Aorta (tissue), 5 donors: ENCODE measurements at regions of chr7 and their contacts with region 1.

Region 1: DNA sequence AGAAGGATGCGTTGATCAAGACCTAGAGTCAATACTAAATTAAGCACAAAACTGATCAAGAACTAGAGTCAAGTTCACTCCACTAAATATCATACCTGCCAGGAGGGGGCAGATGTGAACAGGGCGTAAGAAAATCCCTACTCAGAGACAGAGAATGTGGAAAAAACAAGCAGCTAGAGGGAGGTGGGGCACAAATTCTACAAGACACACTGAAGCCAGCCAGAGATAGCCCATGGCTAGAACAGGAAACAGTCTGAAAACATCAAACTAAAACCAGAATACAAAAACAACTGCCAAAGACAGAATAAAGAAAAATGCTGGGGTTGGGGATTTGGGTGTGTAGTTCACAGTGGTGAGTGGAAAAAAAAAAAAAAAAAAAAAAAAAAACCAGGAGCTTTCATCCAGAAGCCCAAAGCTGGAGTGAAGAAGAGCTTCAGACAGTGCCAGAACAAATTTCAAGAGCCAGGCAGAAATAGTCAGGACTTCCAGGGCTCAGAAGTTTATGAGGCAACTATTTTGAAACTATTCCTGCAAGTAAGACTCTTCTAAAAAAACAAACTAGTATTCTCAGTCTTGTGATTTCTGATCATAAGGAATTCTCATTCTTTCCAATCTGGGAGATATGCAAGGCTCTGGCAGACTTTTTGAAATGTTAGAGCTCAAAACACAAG is 118.3 kb downstream of the CCDC71L start:
- DNase-seq: no peak
- ATAC-seq: peak; percentile 88
- H3K4me3 ChIP-seq: no peak overlapping the region
- H3K27ac ChIP-seq: no peak overlapping the region
- H3K4me1 ChIP-seq: no peaks in the 10 kb centered on the region
- H3K27me3 ChIP-seq: no peaks in the 10 kb centered on the region

Region 2: DNA sequence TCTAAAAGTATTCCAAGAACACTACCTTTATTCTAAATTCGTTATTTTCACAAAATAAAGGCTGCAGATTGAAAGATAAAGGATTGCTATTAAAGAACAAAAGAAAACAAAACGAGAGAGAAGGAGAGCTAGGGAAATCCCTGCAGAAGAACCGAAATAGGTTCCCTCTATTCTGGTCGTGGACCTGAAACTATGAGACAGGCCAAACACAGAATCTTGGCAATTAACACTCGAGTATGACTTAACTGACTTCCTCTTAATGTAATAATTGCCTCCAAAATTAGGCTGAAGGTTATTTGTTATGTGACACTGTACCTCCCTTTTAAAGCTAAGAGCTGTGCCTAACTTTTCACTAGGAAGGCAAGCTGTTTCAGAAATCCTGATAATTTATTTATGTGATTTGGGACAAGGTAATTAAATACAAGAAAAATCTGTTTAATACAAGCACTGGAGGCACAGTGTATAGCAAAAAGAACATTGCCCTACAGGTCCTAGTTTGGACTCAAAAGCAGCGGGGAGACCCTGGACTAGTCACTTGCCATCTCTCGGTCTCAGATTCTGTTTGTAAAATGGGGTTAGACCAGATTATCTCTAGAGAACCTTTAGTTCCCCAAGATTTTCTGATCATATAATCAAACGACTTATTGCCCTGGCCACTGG is 269.5 kb before region 1 on chr7:
- intact Hi-C with region 1: no loop called
- DNase-seq: no peak
- ATAC-seq: no peak
- H3K4me3 ChIP-seq: no peak overlapping the region
- H3K27ac ChIP-seq: no peak overlapping the region
- H3K4me1 ChIP-seq: no peaks in the 10 kb centered on the region
- H3K27me3 ChIP-seq: no peaks in the 10 kb centered on the region

Region 3: DNA sequence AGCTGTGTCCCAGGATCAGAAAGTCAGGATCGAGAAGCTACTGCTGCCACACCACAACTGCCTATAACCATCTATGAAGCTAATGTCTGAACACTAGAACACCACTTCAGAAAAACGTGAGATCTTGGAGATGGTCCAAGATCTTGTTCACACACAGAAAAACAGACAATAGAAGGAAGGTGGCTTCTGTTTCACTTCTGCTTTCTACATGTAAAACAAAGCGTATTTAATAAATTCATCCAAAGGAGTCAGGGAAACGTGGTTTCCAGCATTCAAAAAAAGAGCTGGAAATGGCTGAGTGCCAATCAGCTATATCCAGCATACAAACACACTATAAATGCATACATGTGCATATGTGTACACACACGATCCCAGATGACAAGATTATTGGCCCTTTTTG is 188.5 kb after region 1 on chr7:
- intact Hi-C with region 1: loop called (anchors 5 kb)
- DNase-seq: no peak
- ATAC-seq: no peak
- H3K4me3 ChIP-seq: no peak overlapping the region
- H3K27ac ChIP-seq: no peak overlapping the region
- H3K4me1 ChIP-seq: peaks cover 0 to 3% of the 10 kb centered on the region in 2 donors
- H3K27me3 ChIP-seq: no peaks in the 10 kb centered on the region

Region 4: DNA sequence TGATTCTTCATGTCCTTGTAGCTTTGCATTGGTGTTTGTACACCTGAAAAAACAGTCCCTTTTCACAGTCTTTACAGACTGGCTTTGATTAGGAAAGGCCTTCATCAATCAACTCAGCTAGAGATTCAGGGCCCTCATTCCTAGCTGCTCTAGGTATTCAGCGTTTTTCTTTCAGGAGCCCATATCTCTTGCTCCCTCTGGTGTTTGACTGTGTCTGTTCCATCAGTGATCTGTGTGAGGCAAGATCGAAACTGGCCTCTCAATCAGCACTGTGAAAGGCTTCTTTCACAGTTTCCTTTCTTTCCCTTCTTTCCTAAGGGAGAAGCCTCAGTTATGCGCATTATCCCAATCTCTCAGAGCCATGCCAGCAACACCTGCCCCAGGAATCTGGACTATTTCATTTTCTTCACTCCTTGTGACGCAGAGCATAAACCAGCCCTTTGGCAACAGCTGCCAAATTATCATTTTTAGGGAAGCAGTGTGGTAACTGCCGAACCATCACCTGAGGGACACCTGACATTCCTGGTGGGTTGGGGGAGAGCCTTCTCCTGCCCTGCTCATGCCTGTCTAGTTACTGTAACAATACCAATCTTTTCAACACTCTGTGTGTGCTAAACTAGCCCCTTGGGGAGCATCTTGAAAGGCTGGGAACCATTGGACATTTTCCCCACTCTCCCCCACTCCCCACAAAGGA is 194.0 kb after region 1 on chr7:
- intact Hi-C with region 1: loop called (anchors 5 kb)
- DNase-seq: no peak
- ATAC-seq: peak; percentile 75
- H3K4me3 ChIP-seq: no peak overlapping the region
- H3K27ac ChIP-seq: no peak overlapping the region
- H3K4me1 ChIP-seq: peaks cover 0 to 3% of the 10 kb centered on the region in 2 donors
- H3K27me3 ChIP-seq: no peaks in the 10 kb centered on the region

Region 5: GRCh38 chr7:106927536-106927935 is 384.9 kb after region 1 on chr7:
- intact Hi-C with region 1: no loop called
- DNase-seq: no peak
- ATAC-seq: no peak
- H3K4me3 ChIP-seq: no peak overlapping the region
- H3K27ac ChIP-seq: no peak overlapping the region
- H3K4me1 ChIP-seq: no peaks in the 10 kb centered on the region
- H3K27me3 ChIP-seq: peaks cover 0 to 1% of the 10 kb centered on the region in 2 donors